Adrenal gland (tissue), 19 donors: ENCODE measurements at regions of chr10 and their contacts with region 1.

Region 1: DNA sequence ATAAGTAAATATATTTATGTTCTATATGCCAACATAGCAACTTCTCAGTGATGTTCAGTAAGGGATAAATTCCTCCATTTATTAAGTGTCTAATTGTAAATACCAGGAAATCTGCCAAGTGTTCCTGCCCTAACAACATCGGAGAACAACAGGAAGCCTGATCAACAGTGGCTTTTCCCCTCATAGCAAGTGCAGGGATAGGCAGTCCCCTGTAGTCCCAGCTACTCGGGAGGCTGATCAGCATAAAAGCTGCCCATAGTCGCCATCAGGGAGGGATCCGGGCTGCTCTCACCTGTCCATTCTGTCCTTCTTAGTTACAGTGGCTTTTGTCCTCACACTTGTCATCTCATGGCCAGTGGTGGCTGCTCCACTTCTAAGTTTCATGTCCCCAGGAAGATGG is 141.3 kb downstream of the IDE start:
- DNase-seq: no peak
- H3K4me3 ChIP-seq: no peak overlapping the region
- H3K27ac ChIP-seq: no peak overlapping the region
- H3K4me1 ChIP-seq: no peaks in the 10 kb centered on the region
- H3K27me3 ChIP-seq: no peaks in the 10 kb centered on the region
- CTCF ChIP-seq: no peak
- POLR2A ChIP-seq: no peak

Region 2: GRCh38 chr10:92082583-92083280 is 349.9 kb before region 1 on chr10:
- intact Hi-C with region 1: loop called (anchors 5 to 10 kb)
- DNase-seq: no peak
- H3K4me3 ChIP-seq: no peak overlapping the region
- H3K27ac ChIP-seq: no peak overlapping the region
- H3K4me1 ChIP-seq: peaks cover 0 to 10% of the 10 kb centered on the region in 2 donors
- H3K27me3 ChIP-seq: no peaks in the 10 kb centered on the region
- CTCF ChIP-seq: no peak
- POLR2A ChIP-seq: no peak

Region 3: DNA sequence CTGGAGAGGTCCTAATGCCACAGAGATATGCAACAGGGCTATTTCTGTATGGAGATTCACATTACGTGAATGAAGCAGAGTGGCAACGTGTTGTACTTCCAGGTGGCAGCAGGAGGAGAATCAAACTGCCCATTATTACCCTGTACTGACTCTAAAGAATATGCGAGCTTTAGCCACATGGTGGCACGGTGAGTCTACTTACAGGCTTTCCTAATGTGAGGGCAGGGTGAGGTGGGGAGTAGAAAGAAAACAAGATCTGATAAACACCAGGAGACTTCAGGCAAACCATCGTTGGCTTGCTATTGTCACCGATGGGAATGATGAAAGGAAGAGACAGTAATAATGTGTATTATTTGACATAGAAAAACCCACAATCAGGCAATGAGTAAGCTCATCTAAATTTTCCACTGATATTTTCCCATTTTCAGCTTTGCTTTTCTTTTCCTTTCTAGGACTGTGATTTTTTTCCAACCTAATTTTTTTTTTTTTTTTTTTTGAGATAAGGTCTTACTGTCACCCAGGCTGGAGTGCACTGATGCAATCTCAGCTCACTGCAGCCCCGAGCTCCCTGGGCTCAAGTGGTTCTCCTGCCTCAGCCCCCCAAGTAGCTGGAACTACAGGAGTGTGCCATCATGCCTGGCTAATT is 344.7 kb before region 1 on chr10:
- intact Hi-C with region 1: loop called (anchors 5 to 10 kb)
- DNase-seq: peak; percentile 78 to 94 (median 84)
- H3K4me3 ChIP-seq: peak overlapping the region in 1 of 4 donors; percentile 35
- H3K27ac ChIP-seq: peak overlapping the region in 4 of 5 donors; percentile 33 to 72 (median 44)
- H3K4me1 ChIP-seq: peaks cover 0 to 18% of the 10 kb centered on the region in 2 donors
- H3K27me3 ChIP-seq: no peaks in the 10 kb centered on the region
- CTCF ChIP-seq: peak; percentile 78 to 99 (median 96)
- POLR2A ChIP-seq: no peak

Region 4: DNA sequence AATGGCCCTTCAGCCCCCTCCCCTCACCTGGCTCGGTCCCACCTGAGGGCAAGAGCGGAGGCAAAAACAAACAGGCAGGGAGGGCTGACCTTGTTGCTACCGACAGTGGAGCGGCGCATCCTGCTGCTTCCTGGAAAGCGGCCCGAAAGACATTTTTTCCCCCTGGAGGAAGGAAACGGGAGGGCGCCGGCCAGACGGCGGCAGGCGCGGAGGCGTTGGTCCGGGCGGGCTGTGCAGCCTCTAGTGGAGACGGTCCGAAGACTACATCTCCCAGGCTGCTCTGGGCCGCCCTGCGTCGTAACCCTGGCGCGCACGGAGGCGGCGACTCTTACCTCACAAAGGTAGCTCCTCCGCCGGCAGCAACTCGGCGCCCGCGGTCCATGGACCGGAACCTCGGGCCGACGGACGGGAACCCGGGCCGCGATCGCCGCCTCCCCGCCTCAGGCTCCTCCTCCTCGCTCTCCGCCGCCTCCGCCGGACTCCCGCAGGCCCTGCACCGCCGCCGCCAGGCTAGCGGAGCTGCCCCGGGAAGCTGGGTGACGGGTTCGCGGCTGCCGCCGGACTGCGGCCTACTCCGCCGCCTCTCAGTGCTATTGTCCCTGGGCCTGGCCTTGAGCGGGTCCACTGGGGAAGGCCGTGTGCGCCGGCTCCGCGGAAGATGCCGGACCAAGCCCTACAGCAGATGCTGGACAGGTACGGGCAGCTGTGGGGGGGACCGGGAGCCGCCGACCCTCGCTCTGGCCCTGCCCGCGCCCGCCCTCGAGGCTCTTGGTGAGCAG is 141.6 kb before region 1 on chr10 and contains the starts of genes CPEB3 and MARCHF5:
- intact Hi-C with region 1: loop called in 1 of 2 experiments (anchors 10 kb)
- DNase-seq: peak; percentile 96 to 99 (median 98)
- H3K4me3 ChIP-seq: peak within 1 kb of the TSS; percentile 78 to 93 (median 85)
- H3K27ac ChIP-seq: peak within 1 kb of the TSS; percentile 94 to 99 (median 97)
- H3K4me1 ChIP-seq: peaks cover 9 to 19% of the 10 kb centered on the region in 2 donors
- H3K27me3 ChIP-seq: no peaks in the 10 kb centered on the region
- CTCF ChIP-seq: peak; percentile 74 to 97 (median 92)
- POLR2A ChIP-seq: peak; percentile 85 to 97
- total RNA-seq, gene CPEB3: 4.1 to 13.4 (median 6.2) TPM
- total RNA-seq, gene MARCHF5: 12.0 to 61.9 (median 21.6) TPM

Region 5: DNA sequence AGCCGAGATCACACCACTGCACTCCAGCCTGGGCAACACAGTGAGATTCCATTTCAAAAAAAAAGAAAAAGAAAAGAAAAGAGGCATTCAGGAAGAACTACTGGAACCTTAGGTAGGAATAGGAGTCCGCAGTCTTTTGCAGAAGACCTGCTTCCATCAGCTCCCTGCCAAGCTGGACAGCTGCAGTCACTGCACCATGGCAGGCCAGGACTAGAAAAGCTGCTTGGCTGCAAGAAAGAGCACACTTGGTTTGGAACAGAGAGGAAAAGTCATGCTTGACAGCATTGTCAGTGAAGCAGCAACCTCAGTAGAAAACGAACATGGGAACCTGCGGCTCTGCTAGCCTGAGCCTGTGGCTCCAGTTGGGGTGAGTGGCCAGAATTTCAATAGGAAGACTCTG is 37.3 kb before region 1 on chr10:
- intact Hi-C with region 1: no loop called
- DNase-seq: no peak
- H3K4me3 ChIP-seq: no peak overlapping the region
- H3K27ac ChIP-seq: no peak overlapping the region
- H3K4me1 ChIP-seq: no peaks in the 10 kb centered on the region
- H3K27me3 ChIP-seq: no peaks in the 10 kb centered on the region
- CTCF ChIP-seq: no peak
- POLR2A ChIP-seq: no peak